ENCODE measurements at regions of chr21 and their contacts with region 1.

Region 1: GRCh38 chr21:32569261-32570230 is 15.8 kb downstream of the TCP10L start:
- DNase-seq: peak; percentile 35 to 44
- ATAC-seq: peak; percentile 93
- H3K4me3 ChIP-seq: peak overlapping the region; percentile 58 to 84 (median 72)
- H3K27ac ChIP-seq: peak overlapping the region; percentile 57 to 76 (median 66)
- H3K4me1 ChIP-seq: peaks cover 4 to 5% of the 10 kb centered on the region in 2 donors
- H3K27me3 ChIP-seq: no peaks in the 10 kb centered on the region
- CTCF ChIP-seq: peak; percentile 55 to 80 (median 62)
- POLR2A ChIP-seq: no peak

Region 2: GRCh38 chr21:32278518-32279376 is 290.8 kb before region 1 on chr21 and contains the start of gene MIS18A:
- in situ Hi-C with region 1: no loop called
- intact Hi-C with region 1: loop called (anchors 10 kb)
- DNase-seq: peak; percentile 86 to 93
- ATAC-seq: peak; percentile 95 to 98
- H3K4me3 ChIP-seq: peak within 1 kb of the TSS; percentile 82 to 98 (median 92)
- H3K27ac ChIP-seq: peak within 1 kb of the TSS; percentile 41 to 72 (median 60)
- H3K4me1 ChIP-seq: peaks cover 14 to 25% of the 10 kb centered on the region in 2 donors
- H3K27me3 ChIP-seq: no peaks in the 10 kb centered on the region
- CTCF ChIP-seq: peak in 2 of 5 experiments; percentile 9 to 12
- POLR2A ChIP-seq: peak; percentile 9 to 33
- total RNA-seq, gene MIS18A: 0.51 to 2.7 (median 0.87) TPM

Measured in gastrocnemius medialis (tissue), 4 donors.